ENCODE measurements at regions of chr12 and their contacts with region 1.

Region 1: DNA sequence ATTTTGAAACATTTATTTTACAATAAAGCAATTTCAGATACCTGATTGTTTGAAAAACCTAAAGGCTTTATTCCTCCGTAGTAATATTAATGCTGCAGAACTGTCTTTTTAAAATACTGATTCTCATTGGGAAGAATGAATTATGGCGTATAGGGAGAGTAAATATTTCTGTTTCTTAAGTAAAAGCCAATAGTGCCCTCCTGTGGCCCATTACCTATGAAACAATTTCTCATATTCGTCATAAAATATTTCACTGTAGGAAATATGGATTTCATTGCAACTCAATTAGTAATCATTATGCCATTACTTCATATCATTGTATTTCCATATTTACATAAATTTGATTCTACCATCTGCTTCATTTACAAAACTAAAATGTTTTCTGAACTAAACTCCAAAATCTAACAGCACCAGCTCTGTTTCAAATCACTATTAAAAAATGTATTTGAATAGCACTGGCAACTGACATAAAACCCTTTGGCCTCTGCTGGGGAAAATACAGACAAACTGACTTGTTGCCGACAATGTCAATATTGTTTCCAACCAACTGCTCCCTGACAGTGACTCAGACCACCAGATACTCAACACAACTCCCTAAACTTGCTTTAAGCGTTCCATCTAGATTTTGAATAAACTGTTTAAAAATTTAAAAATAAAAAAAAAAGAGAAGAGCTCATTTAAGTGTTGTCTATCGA is 290.3 kb downstream of the NAV3 start:
- DNase-seq: peak; percentile 37
- H3K4me3 ChIP-seq: no peak overlapping the region
- H3K27ac ChIP-seq: no peak overlapping the region
- H3K4me1 ChIP-seq: peaks cover 14% of the 10 kb centered on the region
- H3K27me3 ChIP-seq: no peaks in the 10 kb centered on the region
- CTCF ChIP-seq: peak; percentile 55

Region 2: GRCh38 chr12:77667101-77667500 is 453.9 kb before region 1 on chr12:
- CTCF ChIA-PET with region 1: no interaction called
- POLR2A ChIA-PET with region 1: no interaction called
- intact Hi-C with region 1: no loop called
- DNase-seq: no peak
- H3K4me3 ChIP-seq: no peak overlapping the region
- H3K27ac ChIP-seq: no peak overlapping the region
- H3K4me1 ChIP-seq: no peaks in the 10 kb centered on the region
- H3K27me3 ChIP-seq: peaks cover 4% of the 10 kb centered on the region
- CTCF ChIP-seq: no peak

Region 3: DNA sequence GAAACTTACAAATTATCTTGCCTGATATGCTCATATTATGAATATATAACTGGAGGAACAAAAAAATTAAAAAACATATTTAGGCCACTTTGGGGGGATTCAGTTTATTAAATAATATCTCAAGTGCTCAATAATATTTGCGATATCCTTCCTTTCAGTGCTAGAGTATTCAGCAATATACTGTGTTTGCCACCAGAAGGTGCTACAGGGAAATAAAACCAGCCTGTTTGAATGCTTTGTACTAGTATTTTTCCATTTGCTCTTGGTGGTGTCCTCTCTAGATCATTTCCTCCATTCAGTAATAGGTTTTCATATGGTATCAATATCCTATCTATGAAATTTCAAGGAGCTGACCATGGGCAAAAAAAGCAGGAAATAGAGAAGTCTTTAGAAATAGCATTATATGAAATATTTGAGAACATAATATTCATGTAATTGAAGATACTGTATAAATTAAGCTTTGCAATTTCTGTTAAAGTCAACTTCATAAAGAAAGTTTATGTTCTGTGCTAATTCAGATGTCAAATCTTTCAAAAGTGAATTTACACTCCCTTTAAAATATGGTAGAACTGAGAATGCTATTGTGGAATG is 396.6 kb before region 1 on chr12:
- CTCF ChIA-PET with region 1: no interaction called
- POLR2A ChIA-PET with region 1: no interaction called
- intact Hi-C with region 1: loop called (anchors 10 kb)
- DNase-seq: peak; percentile 72
- H3K4me3 ChIP-seq: no peak overlapping the region
- H3K27ac ChIP-seq: no peak overlapping the region
- H3K4me1 ChIP-seq: peaks cover 26% of the 10 kb centered on the region
- H3K27me3 ChIP-seq: no peaks in the 10 kb centered on the region
- CTCF ChIP-seq: peak; percentile 83

Region 4: DNA sequence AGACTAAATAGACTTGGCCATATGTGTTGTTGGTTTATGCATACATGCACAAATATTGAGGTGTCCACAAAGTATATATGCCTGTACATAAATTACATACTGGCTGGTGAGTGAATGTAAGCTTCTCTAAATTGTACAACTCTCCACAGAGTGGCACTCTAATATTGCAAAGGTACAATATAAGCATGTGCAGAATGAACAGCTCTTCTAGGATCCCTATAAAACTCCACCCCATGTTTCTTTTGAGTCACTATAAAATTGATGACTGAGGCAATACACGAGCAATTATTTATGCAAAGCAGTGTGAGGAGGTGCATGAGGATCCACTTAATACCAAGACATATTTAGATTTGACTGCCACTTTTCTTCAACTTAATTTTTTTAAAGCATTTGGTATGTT is 118.1 kb before region 1 on chr12:
- CTCF ChIA-PET with region 1: interaction called, 5 read pairs
- POLR2A ChIA-PET with region 1: no interaction called
- intact Hi-C with region 1: loop called (anchors 2 kb)
- DNase-seq: peak; percentile 61
- H3K4me3 ChIP-seq: no peak overlapping the region
- H3K27ac ChIP-seq: no peak overlapping the region
- H3K4me1 ChIP-seq: no peaks in the 10 kb centered on the region
- H3K27me3 ChIP-seq: no peaks in the 10 kb centered on the region
- CTCF ChIP-seq: peak; percentile 51

Measured in A673 (cell line).